Ovary (tissue), 10 donors: ENCODE measurements at regions of chr6 and their contacts with region 1.

Region 1: GRCh38 chr6:127821431-127821830 is 79.4 kb downstream of the THEMIS start:
- DNase-seq: no peak
- H3K4me3 ChIP-seq: no peak overlapping the region
- H3K27ac ChIP-seq: no peak overlapping the region
- H3K4me1 ChIP-seq: no peaks in the 10 kb centered on the region
- H3K27me3 ChIP-seq: no peaks in the 10 kb centered on the region
- CTCF ChIP-seq: no peak
- EP300 ChIP-seq: no peak
- POLR2A ChIP-seq: no peak

Region 2: DNA sequence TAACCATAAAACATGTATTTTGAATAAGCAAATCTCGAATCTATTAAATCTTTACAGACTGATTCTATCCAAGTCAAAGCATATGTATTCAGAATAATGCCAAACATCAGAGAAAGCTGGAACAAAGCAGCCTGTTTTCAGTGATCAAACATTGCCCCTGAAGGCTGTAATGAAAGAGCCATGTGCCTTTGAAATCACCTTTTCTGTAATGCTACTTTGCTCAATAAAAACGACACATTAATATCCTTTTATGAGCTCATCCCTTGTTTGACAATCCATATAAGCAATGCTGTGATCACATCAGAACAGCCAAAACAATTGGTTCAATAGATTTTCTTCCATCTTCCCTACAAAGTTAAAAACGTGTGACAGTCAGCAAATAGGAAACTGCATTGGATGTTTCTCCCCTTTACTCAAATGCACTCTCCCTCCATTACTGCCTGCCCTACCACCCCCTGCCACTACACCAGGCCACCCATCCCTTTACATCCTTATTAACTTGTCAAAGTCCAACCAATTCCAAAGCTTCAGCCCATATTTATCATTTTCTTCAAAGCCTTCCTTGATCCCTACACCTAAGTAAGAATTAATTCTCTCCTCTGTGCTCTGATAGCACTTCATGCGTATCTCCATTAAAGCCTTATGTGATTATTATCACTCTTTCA is 37.4 kb after region 1 on chr6:
- intact Hi-C with region 1: loop called in 1 of 4 experiments (anchors 2 kb)
- DNase-seq: no peak
- H3K4me3 ChIP-seq: no peak overlapping the region
- H3K27ac ChIP-seq: no peak overlapping the region
- H3K4me1 ChIP-seq: no peaks in the 10 kb centered on the region
- H3K27me3 ChIP-seq: no peaks in the 10 kb centered on the region
- CTCF ChIP-seq: no peak
- EP300 ChIP-seq: no peak
- POLR2A ChIP-seq: no peak